ENCODE measurements at regions of chr12 and their contacts with region 1.

Region 1: DNA sequence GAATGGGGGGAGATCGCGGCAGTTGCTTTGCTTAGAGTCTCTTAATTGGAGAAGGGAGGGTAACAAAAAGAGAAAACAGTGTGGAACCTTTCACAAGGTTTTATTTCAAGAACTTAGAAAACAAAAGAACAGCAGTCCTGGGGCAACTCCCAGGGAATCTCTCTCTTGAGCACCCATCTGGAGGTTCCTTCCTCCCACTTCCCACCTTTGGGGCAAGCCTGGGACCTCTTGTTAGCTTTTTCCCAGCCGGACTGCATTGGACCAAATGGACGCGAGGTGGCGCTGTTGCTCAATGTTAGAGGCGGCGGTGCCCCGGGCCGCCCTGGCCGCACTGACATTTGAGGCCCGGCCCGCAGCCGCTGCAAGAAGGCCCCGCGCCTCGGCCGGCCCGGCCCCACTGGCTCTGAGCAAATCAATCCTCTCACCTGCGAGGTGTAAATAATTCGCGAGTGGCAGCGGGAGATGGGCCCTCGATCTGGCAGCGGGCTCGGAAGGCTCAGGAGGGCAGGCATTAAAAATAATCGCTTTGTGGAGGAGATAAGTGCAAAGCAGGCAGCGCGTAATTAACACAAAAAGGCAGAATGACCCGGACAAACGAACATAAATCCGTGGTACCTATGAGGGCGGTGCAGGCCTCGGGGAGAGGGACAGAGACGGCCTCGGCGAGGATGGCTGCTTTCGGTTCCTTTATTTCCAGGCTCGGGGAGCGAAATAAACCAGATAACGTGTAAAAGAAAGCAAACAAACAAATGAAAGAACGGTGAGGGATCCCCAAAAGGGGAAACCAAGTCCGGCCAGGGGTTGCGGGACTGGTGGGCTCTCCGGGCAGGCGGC is 2.7 kb upstream of the HOXC8 start:
- DNase-seq: peak; percentile 88
- H3K4me3 ChIP-seq: peak overlapping the region in 2 of 4 donors; percentile 13 to 32
- H3K27ac ChIP-seq: no peak overlapping the region
- H3K4me1 ChIP-seq: peaks cover 0 to 22% (median 14%) of the 10 kb centered on the region in 4 donors
- H3K27me3 ChIP-seq: peaks cover 98% of the 10 kb centered on the region
- CTCF ChIP-seq: peak; percentile 91 to 96 (median 95)
- EP300 ChIP-seq: no peak
- POLR2A ChIP-seq: no peak

Region 2: DNA sequence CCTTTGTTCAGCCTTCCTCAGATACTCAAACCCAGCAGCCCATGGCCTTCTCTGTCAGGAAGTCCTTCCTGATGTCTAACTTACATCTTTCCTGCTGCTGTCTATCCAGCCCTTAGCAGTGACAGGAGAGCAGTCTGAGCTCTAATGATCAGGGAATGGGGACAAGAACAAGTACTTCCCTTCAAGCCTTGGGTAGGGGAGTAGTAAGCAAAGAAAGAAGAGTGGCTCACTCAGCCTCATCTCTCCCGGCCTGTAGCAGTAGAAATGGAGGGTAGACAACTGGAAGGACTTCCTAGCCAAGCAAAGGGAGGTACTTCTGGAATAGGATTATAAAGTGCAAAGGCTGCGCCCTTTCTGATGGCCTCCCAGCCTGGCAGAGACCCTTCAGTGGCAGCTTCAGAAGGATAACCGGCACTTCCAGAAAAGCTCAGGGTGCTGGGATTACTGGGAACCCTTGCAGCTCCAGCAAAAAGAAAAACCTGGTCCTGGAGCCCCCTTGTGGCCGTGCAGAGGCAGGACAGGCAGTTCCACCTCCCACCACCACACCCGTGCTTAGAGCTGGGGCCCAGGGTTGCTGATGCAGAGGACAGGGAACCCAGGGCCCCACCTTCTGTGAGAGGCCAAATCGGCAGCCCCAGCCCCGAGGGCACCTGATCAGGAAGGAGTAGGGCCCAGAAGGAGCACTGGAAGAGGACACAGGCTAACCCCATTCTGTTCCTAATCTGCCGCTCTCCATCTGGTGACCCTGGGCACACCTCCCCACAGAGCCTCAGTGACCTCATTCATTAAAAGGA is 195.1 kb after region 1 on chr12:
- in situ Hi-C with region 1: loop called in 1 of 4 experiments (anchors 5 kb)
- intact Hi-C with region 1: loop called (anchors 5 kb)
- DNase-seq: peak; percentile 68
- H3K4me3 ChIP-seq: no peak overlapping the region
- H3K27ac ChIP-seq: no peak overlapping the region
- H3K4me1 ChIP-seq: no peaks in the 10 kb centered on the region
- H3K27me3 ChIP-seq: peaks cover 100% of the 10 kb centered on the region
- CTCF ChIP-seq: peak; percentile 96 to 98 (median 97)
- EP300 ChIP-seq: no peak
- POLR2A ChIP-seq: no peak

Region 3: GRCh38 chr12:54207484-54208294 is 201.6 kb after region 1 on chr12:
- in situ Hi-C with region 1: loop called in 1 of 4 experiments (anchors 5 kb)
- intact Hi-C with region 1: loop called (anchors 5 kb)
- DNase-seq: peak; percentile 78
- H3K4me3 ChIP-seq: no peak overlapping the region
- H3K27ac ChIP-seq: no peak overlapping the region
- H3K4me1 ChIP-seq: no peaks in the 10 kb centered on the region
- H3K27me3 ChIP-seq: peaks cover 94% of the 10 kb centered on the region
- CTCF ChIP-seq: peak; percentile 82 to 92 (median 89)
- EP300 ChIP-seq: no peak
- POLR2A ChIP-seq: no peak